BJ (cell line): ENCODE measurements at regions of chr19 and their contacts with region 1.

Region 1: GRCh38 chr19:44071824-44072542 is at the start of gene ZNF284:
- DNase-seq: peak; percentile 64
- H3K4me3 ChIP-seq: peak within 1 kb of the TSS; percentile 73
- H3K27me3 ChIP-seq: no peaks in the 10 kb centered on the region
- CTCF ChIP-seq: no peak
- polyA plus RNA-seq, gene ZNF284: 1.0 and 1.4 TPM in 2 replicates

Region 2: GRCh38 chr19:44042147-44042546 is 29.8 kb before region 1 on chr19:
- CTCF ChIA-PET with region 1: no interaction called
- POLR2A ChIA-PET with region 1: no interaction called
- DNase-seq: no peak
- H3K4me3 ChIP-seq: no peak overlapping the region
- H3K27me3 ChIP-seq: no peaks in the 10 kb centered on the region
- CTCF ChIP-seq: no peak

Region 3: DNA sequence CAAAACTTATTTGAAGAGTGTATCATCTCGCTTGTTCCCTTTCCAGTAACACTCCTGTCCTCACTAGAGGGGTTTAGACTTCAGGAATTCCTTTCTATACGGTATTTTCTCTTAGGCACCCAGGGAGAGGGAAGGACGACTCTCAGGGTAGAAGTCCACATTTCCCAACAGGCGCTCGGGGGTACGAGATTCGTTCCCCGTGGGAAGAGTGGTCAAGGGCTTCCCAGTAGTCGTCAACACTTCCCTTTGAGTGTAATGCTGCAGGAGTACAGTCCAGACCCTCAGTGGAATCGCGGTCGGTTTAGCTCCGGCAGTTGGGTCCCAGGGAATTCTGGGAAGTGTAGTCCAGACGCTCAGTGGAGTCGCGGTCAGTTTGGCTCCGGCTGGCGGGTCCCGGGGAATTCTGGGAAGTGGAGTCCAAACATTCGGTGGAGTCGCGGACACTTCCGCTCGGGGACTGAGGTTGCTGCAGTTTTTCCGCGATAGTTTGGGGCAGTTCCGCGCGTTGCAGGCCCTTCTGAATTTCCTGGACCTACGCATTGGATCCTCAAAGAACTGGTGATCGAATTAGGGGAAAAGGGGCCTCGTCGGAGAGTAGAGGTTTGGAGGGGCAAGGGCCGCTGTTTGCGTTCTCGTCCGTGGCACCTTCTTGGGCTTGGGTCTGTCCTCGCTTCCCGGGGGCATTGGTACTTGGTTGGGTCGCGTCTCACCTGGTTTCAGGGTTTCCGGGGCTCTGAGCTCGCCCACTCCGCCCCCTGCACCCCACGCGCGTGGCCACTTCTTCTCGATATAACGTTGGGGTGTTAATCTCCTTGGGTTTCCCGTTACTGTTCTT is 22.2 kb after region 1 on chr19 and contains the start of gene ZNF224:
- CTCF ChIA-PET with region 1: no interaction called
- POLR2A ChIA-PET with region 1: interaction called, 13 read pairs
- DNase-seq: peak; percentile 65
- H3K4me3 ChIP-seq: peak within 1 kb of the TSS; percentile 78
- H3K27me3 ChIP-seq: no peaks in the 10 kb centered on the region
- CTCF ChIP-seq: no peak
- polyA plus RNA-seq, gene ZNF224: 13.2 and 17.1 TPM in 2 replicates

Region 4: GRCh38 chr19:44192127-44192526 is 120.1 kb after region 1 on chr19:
- CTCF ChIA-PET with region 1: no interaction called
- POLR2A ChIA-PET with region 1: no interaction called
- DNase-seq: no peak
- H3K4me3 ChIP-seq: no peak overlapping the region
- H3K27me3 ChIP-seq: no peaks in the 10 kb centered on the region
- CTCF ChIP-seq: no peak